ENCODE measurements at regions of chr13 and their contacts with region 1.

Region 1: DNA sequence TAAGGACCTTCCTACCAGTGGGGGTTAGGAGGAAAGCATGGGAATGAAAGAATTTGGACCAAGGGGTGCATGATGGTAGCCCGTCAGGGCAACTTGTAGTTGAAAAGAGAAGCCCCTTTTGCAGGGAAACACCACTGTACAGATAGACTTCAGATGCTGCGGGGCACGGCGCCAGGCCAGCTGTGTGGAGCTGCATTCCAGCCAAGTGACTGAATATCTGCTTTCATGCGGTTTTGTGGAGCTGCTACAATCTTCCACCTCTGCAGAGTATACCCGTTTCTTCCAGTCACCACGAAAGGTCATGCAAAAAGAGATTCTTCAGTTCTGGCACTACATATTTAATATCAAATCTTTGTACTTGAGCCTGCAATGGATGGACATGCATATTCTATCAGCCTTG is 104.7 kb downstream of the RGCC start:
- DNase-seq: no peak
- ATAC-seq: no peak
- H3K4me3 ChIP-seq: no peak overlapping the region
- H3K4me3 Mint-ChIP-seq: no peak overlapping the region
- H3K27ac ChIP-seq: no peak overlapping the region
- H3K27ac Mint-ChIP-seq: no peak overlapping the region
- H3K4me1 ChIP-seq: peaks cover 6% of the 10 kb centered on the region
- H3K4me1 Mint-ChIP-seq: peaks cover 20% of the 10 kb centered on the region
- H3K27me3 ChIP-seq: no peaks in the 10 kb centered on the region
- H3K27me3 Mint-ChIP-seq: no peaks in the 10 kb centered on the region
- CTCF ChIP-seq: no peak

Region 2: DNA sequence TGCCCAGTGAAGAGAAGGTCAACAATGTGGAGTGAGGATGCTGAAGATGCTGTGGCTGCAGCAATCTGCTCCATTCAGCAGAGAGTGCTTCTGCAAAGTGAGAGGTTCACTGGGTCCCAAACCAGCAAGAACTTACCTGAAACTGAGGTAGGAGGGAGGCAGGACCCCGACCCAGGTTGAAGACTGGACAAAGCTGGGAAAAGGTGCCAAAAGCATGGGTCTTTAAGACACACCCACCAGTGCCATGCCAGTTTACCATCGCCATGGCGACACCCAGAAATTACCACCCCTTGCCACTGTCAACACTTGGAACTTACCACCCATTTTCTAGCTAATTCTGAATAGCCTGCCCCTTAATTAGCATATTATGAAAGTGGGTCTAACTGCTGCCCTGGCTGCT is 34.1 kb before region 1 on chr13:
- CTCF ChIA-PET with region 1: no interaction called
- POLR2A ChIA-PET with region 1: no interaction called
- intact Hi-C with region 1: loop called in 1 of 2 experiments (anchors 5 kb)
- DNase-seq: no peak
- ATAC-seq: no peak
- H3K4me3 ChIP-seq: no peak overlapping the region
- H3K4me3 Mint-ChIP-seq: no peak overlapping the region
- H3K27ac ChIP-seq: no peak overlapping the region
- H3K27ac Mint-ChIP-seq: no peak overlapping the region
- H3K4me1 ChIP-seq: no peaks in the 10 kb centered on the region
- H3K4me1 Mint-ChIP-seq: no peaks in the 10 kb centered on the region
- H3K27me3 ChIP-seq: no peaks in the 10 kb centered on the region
- H3K27me3 Mint-ChIP-seq: no peaks in the 10 kb centered on the region
- CTCF ChIP-seq: no peak

Region 3: DNA sequence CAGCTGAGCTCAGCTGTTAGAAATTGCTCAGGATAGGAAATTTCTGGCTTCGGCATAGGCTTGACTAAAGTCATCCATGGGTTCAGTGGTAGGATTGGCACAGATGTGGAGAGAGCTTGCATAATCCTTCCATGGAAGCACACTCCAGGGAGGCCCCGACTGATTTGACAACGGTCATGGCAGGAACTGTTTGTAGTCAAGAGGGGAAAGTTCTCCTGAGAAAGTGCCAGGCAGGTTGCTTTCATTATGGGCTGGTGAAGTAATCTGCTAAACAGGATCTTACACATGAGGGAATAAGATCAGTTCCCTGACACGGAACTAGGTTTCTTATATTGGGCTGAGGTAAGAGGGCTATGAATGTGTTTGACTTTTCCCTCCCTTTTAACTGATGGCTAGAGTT is 15.4 kb after region 1 on chr13:
- CTCF ChIA-PET with region 1: interaction called, 3 read pairs
- POLR2A ChIA-PET with region 1: no interaction called
- intact Hi-C with region 1: loop called in 1 of 2 experiments (anchors 2 kb)
- DNase-seq: no peak
- ATAC-seq: no peak
- H3K4me3 ChIP-seq: no peak overlapping the region
- H3K4me3 Mint-ChIP-seq: no peak overlapping the region
- H3K27ac ChIP-seq: no peak overlapping the region
- H3K27ac Mint-ChIP-seq: peak overlapping the region; percentile 66
- H3K4me1 ChIP-seq: no peaks in the 10 kb centered on the region
- H3K4me1 Mint-ChIP-seq: peaks cover 7% of the 10 kb centered on the region
- H3K27me3 ChIP-seq: no peaks in the 10 kb centered on the region
- H3K27me3 Mint-ChIP-seq: no peaks in the 10 kb centered on the region
- CTCF ChIP-seq: no peak